Stomach (tissue), 19 donors: ENCODE measurements at regions of chr7 and their contacts with region 1.

Region 1: GRCh38 chr7:26356929-26357798 is 65.5 kb downstream of the SNX10 start:
- DNase-seq: no peak
- H3K4me3 ChIP-seq: no peak overlapping the region
- H3K27ac ChIP-seq: no peak overlapping the region
- H3K4me1 ChIP-seq: no peaks in the 10 kb centered on the region
- H3K27me3 ChIP-seq: no peaks in the 10 kb centered on the region
- CTCF ChIP-seq: no peak
- EP300 ChIP-seq: no peak
- POLR2A ChIP-seq: no peak

Region 2: DNA sequence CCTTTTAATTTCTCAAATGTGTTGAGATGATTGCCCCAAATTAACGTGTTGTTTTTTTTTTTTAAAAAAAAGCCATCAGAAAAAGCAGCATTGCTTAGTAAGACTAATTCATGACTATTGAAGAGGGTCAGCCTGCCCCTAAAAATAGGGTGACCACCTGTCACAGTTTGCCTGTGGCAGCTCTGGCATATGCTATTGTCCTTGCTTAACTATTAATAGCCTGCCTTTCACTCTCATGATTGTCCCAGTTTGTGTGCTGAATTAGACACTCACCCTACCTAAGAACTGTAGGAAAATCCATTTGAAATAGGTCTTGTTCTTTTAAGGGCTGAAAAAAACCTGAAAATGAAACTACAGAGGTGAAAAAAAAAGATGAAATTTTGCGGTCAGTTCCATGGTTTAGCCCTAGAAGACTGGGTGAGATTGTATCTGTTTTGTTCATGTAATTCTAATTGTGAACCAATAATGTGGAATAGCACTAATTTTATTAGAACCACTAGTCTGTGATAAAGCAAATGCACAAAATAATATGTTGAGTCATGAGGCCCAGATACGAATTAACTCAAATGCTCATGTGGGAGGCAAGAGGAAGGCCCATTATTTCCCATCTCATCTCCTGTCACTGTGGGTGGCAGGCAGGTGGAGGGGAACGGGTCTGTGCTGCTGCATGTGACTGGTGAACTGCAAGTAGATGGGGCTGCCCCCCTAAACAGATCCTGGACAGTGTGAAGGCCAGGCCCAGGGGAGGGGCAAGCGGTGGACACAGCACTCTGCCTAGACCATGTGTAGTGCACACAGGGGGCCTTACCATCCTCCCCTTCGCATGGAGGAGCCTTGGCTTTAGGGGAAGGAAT is 470.6 kb before region 1 on chr7:
- intact Hi-C with region 1: loop called (anchors 5 kb)
- DNase-seq: no peak
- H3K4me3 ChIP-seq: no peak overlapping the region
- H3K27ac ChIP-seq: no peak overlapping the region
- H3K4me1 ChIP-seq: no peaks in the 10 kb centered on the region
- H3K27me3 ChIP-seq: peaks cover 0 to 73% (median 13%) of the 10 kb centered on the region in 3 donors
- CTCF ChIP-seq: no peak
- EP300 ChIP-seq: no peak
- POLR2A ChIP-seq: no peak

Region 3: GRCh38 chr7:26083113-26083512 is 274.1 kb before region 1 on chr7:
- intact Hi-C with region 1: loop called (anchors 5 kb)
- DNase-seq: peak in 1 of 2 donors; percentile 36
- H3K4me3 ChIP-seq: no peak overlapping the region
- H3K27ac ChIP-seq: no peak overlapping the region
- H3K4me1 ChIP-seq: peaks cover 0 to 11% (median 9%) of the 10 kb centered on the region in 4 donors
- H3K27me3 ChIP-seq: peaks cover 0 to 33% (median 9%) of the 10 kb centered on the region in 3 donors
- CTCF ChIP-seq: no peak
- EP300 ChIP-seq: no peak
- POLR2A ChIP-seq: no peak